ENCODE measurements at regions of chr14 and their contacts with region 1.

Region 1: GRCh38 chr14:75560962-75561432 is 17.4 kb upstream of the FLVCR2 start:
- DNase-seq: no peak
- H3K4me3 ChIP-seq: no peak overlapping the region
- CTCF ChIP-seq: peak; percentile 86

Region 2: GRCh38 chr14:75533791-75534555 is 27.0 kb before region 1 on chr14:
- CTCF ChIA-PET with region 1: interaction called, 12 read pairs
- POLR2A ChIA-PET with region 1: interaction called, 3 read pairs
- DNase-seq: no peak
- H3K4me3 ChIP-seq: no peak overlapping the region
- CTCF ChIP-seq: no peak

Region 3: GRCh38 chr14:75549169-75549568 is 11.8 kb before region 1 on chr14:
- CTCF ChIA-PET with region 1: interaction called, 26 read pairs
- POLR2A ChIA-PET with region 1: no interaction called
- DNase-seq: no peak
- H3K4me3 ChIP-seq: no peak overlapping the region
- CTCF ChIP-seq: no peak

Region 4: DNA sequence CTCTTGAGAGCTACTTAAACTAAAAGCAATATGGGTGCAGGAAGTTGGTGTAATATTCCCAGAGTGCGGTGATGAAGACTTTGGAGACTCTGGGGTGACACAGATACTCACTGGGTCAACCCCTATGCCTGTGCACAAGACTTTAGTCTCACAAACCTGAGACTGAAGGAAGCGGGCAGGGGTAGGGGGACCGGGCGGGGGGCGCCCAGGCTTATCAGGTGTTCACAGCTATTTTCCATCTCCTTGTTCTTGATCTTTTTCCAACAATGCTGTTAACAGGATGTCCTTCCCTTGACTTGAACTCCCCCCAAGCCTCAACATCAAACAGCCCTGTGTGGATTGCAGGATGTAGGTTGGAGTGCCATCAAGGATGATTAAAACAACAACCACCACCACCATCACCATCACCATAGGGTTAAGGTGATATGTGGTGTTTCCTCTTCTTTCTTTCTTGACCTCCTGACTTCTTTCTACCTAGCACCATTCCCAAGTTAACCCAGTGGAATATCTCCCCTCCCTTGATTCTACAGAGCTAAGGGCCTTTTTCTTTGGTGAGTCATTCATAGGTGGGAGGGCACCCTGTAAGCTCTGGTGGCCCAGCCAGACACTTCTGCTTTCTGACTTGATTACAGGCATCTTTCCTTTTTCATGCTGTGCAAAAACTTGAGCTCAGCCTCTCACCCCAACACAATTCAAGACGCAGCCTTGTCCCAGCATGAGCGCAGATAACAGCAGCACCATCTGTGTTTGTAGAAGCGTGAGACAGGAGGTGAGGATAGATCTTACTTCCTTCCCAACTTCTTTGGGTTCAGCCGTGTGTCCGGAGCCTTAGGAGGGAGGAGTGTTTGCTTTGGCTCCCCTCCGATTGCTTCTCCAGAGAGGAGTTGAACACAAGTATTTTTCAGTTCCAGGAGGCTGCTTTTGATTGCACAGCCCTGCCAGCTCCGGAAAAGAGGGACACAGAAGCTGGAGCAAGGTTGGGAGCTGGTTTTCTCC is 44.2 kb after region 1 on chr14:
- CTCF ChIA-PET with region 1: interaction called, 17 read pairs
- POLR2A ChIA-PET with region 1: no interaction called
- DNase-seq: no peak
- H3K4me3 ChIP-seq: no peak overlapping the region
- CTCF ChIP-seq: no peak

Region 5: GRCh38 chr14:75648066-75648838 is 87.3 kb after region 1 on chr14:
- CTCF ChIA-PET with region 1: interaction called, 50 read pairs
- POLR2A ChIA-PET with region 1: no interaction called
- DNase-seq: peak; percentile 93
- H3K4me3 ChIP-seq: no peak overlapping the region
- CTCF ChIP-seq: no peak

Region 6: GRCh38 chr14:75831458-75831857 is 270.5 kb after region 1 on chr14:
- CTCF ChIA-PET with region 1: no interaction called
- POLR2A ChIA-PET with region 1: no interaction called
- DNase-seq: no peak
- H3K4me3 ChIP-seq: no peak overlapping the region
- CTCF ChIP-seq: no peak

Measured in AG04449 (cell line).